ENCODE measurements at regions of chr1 and their contacts with region 1.

Region 1: DNA sequence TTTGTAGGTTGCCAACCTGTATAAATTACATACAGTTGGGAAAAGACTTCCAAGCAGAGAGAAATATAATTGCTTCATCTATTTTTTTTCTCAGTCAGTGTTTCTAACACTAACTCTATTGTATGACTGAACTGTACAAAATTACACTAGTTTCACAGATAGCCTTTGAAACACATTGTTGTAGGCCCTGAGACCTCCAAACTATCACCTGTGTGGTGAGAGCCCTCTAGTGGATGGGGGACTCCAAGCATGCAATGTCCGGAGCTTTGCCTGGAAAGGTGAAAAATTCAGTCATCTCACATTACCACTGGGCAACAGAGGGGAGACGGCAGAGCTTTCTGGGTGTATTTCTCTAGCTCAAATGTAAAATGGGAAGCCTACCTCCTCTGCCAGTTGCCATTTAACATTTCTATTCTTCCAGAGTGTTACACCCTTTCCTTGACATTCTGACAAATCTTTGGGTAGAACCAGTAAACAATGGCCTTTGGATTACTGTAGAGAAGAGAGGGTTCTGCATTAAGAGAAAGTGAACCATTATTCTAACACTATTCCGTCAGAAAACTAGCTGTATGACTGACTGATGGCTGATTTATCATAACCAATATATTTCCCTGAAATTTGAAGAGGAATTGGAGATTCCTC is 212.2 kb downstream of the LYPLAL1 start:
- DNase-seq: peak; percentile 69
- H3K4me3 ChIP-seq: no peak overlapping the region
- H3K27ac ChIP-seq: no peak overlapping the region
- H3K4me1 ChIP-seq: no peaks in the 10 kb centered on the region
- H3K27me3 ChIP-seq: no peaks in the 10 kb centered on the region

Region 2: DNA sequence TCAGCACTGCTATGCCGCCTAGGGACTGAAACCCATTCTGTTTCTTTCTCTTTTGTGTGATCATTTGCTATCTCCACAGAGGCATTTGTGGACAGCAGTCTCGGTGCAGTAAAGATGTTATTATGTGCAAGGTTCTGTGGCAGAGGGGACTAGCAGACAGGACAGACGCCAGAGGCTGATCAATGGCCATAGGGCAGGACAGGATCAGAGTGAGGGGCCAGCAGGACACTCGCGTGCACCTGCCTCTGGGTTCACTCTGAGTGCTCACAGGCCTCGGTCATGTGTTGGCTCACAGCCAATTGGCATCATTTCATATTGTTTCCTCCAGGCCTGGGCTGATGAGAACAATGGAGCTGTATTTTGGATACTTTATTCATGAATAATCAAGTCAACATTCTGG is 828.2 kb before region 1 on chr1:
- in situ Hi-C with region 1: loop called (anchors 25 kb)
- DNase-seq: no peak
- H3K4me3 ChIP-seq: no peak overlapping the region
- H3K27ac ChIP-seq: no peak overlapping the region
- H3K4me1 ChIP-seq: no peaks in the 10 kb centered on the region
- H3K27me3 ChIP-seq: no peaks in the 10 kb centered on the region

Region 3: GRCh38 chr1:219293410-219293809 is 92.5 kb before region 1 on chr1:
- in situ Hi-C with region 1: no loop called
- DNase-seq: no peak
- H3K4me3 ChIP-seq: no peak overlapping the region
- H3K27ac ChIP-seq: no peak overlapping the region
- H3K4me1 ChIP-seq: peaks cover 4% of the 10 kb centered on the region; the same call in 1 of the 2 replicates
- H3K27me3 ChIP-seq: no peaks in the 10 kb centered on the region

Region 4: DNA sequence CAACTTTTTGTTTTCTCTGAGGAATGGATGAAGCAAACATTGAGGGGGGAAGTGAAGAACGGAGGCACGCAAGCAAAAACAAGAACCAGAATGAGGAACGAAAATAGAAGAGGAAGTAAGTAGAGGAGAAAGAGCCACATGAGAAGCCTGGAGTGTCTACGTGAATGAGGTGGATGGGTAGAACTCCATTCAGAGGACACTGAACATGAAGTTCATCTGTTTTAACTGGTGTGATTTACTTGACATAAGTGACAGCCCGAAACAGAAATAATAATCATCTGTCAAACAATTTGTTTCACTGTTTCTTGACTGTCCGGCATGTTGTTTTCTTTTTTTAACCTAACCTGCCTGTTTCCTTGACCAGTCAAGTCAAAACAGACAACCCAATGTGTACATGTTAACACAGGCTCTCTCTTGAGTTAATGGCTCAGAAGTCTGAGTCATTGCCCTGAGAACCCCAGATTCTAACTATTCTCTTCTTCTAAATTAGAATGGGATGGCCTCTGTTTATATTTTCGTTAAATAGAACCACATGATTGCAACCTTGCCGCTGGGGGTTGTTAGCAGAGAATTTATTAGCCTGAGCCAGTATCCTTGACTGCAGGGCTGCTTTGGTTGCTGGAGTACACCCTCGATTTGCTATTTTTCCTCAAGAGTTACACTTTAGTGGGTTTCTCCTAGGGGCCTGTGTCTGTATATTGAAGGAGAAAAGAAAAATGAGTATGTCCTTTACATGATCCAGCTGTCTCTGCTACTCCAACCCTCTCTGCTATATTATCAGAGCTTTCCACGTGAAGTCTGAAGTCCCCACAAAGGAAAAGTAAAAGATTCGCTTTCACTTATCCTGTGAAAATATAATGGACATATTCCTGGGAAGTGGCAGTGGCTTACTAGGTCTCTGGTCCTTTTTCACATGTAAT is 75.2 kb after region 1 on chr1:
- in situ Hi-C with region 1: no loop called
- DNase-seq: peak; percentile 76
- H3K4me3 ChIP-seq: no peak overlapping the region
- H3K27ac ChIP-seq: peak overlapping the region; percentile 28
- H3K4me1 ChIP-seq: peaks cover 46% of the 10 kb centered on the region
- H3K27me3 ChIP-seq: no peaks in the 10 kb centered on the region

Region 5: GRCh38 chr1:219682788-219683187 is 296.9 kb after region 1 on chr1:
- in situ Hi-C with region 1: no loop called
- DNase-seq: no peak
- H3K4me3 ChIP-seq: no peak overlapping the region
- H3K27ac ChIP-seq: no peak overlapping the region
- H3K4me1 ChIP-seq: no peaks in the 10 kb centered on the region
- H3K27me3 ChIP-seq: peaks cover 5% of the 10 kb centered on the region; the same call in 1 of the 2 replicates

Region 6: GRCh38 chr1:219837274-219837993 is 451.5 kb after region 1 on chr1:
- in situ Hi-C with region 1: no loop called
- DNase-seq: peak; percentile 61
- H3K4me3 ChIP-seq: no peak overlapping the region
- H3K27ac ChIP-seq: no peak overlapping the region
- H3K4me1 ChIP-seq: no peaks in the 10 kb centered on the region
- H3K27me3 ChIP-seq: 0 out of 2 replicates have a peak, but pooled peaks cover 8% of the 10 kb centered on the region

Measured in GM23248 (cell line).